ENCODE measurements at regions of chr6 and their contacts with region 1.

Region 1: DNA sequence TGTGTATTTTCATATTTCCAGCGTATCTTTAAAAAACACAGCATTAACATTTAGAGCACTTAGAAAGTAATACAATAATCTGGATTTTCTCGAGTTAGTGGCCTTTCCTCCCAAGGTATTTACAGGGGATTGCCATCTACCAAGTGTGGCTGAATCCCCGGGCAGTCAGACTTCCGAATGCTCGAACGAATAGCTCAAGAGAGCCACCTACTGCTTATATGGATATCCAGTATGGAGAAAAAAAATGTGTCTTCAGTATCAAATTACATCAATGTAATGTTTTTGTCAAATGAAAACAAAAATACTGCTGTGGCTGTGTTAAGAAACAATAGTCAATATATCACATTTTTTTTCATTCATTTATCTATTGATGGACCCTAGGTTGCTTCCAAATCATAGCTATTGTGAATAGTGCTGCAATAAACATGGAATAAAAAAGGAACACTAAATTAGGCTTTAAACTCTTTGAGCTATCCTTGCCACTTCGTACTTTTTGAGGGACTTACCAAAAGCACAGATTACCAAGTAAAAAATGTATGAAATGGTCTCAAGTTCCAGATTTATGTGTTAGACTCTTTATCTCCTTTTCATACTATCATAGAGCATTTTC is 654.5 kb upstream of the PTCHD4 start:
- DNase-seq: peak in 6 of 10 donors; percentile 22 to 85 (median 28)

Region 2: DNA sequence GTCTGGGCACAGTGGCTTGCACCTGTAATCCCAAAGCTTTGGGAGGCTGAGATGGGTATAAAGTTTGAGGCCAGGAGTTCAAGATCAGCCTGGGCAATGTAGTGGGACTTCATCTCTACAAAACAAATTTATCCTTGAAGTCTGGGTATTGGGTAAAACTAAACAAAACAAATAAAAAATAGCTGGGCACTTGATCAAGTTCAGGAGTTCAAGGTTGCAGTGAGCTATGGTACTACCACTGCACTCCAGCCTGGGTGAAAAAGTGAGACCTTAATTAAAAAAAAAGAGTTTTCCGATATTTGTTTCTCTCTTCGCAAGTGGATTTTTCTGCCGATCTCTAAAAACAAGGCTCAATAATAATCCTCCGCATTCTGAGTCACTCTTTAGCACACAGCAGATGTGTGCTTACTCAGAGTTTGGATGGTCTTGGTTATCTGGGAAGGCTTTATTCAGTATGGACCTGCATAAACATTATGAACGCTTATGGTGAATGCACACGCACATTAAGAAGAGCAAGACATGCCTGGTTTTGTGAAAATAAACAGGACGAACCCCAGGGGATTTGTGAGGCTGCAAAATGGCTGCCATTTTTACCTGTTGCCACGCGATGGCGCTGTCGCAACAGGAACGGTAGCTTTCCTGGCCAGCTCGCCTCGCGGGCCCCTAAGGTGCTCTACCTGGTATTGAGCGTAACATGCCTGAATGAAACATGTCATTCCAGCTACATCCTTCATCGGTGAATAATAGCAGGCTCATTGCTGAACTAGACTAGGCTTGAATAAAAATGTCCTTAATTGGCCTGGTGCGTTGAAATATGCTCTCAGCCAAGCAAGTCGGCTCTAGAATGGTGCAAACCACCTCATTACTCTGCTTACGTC is 977.6 kb before region 1 on chr6:
- intact Hi-C with region 1: loop called (anchors 2 kb)
- DNase-seq: peak; percentile 16 to 93 (median 60)

Region 3: GRCh38 chr6:48087448-48087847 is 678.0 kb before region 1 on chr6:
- intact Hi-C with region 1: loop called (anchors 2 kb)
- DNase-seq: no peak

Region 4: DNA sequence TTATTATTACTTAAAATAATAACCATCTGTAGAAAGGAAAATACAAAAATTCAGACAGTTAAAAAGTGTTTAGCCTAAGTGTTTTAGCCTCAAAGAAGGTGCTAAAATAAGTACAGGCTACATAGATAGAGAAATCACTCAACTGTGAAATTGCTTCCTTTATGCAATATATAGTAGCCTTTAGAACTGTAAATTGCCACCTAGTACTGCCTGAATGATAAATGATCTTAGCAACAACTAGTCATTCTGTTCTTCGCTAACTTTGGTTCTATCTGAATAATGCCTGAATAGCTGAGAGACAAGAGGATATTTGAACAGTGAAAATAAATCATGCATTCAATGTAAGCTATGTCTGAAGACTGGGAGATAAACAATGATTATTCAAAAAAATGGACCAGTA is 51.2 kb before region 1 on chr6:
- intact Hi-C with region 1: no loop called
- DNase-seq: no peak

Measured in posterior cingulate gyrus (tissue), 11 donors.